ENCODE measurements at regions of chr6 and their contacts with region 1.

Region 1: DNA sequence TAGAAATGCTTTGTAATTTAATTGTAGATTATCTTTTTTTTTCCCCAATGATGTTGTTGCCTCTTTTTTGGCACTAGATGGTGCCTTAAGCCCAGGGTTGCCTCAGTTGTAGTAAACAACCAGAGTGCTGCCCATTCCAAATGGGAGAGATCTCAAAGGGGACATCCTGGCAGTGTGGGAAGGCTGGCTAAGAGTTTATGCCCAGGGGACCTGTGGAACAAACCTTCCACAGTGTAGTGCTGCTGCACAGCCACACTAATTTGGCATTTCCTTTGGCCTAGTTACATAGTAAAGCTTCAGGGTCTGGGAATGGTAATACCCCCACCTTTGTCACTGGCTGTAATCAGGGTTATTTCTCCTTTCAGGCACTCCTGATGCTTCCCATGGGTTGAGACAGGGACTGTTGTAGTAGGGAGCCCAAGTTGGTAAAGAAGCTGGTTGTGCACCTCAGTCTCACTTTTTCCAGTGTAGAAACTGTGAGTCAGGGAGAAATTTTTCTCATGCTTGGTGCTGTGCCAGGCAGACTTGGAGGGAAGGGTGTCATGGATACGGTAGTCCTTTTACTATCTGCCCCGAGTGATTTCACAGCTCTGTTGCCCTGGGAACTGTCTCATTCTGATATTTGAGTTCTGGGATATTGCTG is 177.8 kb upstream of the ECI2 start:
- DNase-seq: peak in 1 of 2 donors; percentile 87
- H3K4me3 ChIP-seq: peak overlapping the region in 1 of 2 donors; percentile 12
- H3K27ac ChIP-seq: peak overlapping the region; percentile 46 to 64
- H3K4me1 ChIP-seq: peaks cover 0 to 11% of the 10 kb centered on the region in 2 donors
- H3K27me3 ChIP-seq: no peaks in the 10 kb centered on the region
- CTCF ChIP-seq: peak in 2 of 3 experiments; percentile 23 to 40

Region 2: DNA sequence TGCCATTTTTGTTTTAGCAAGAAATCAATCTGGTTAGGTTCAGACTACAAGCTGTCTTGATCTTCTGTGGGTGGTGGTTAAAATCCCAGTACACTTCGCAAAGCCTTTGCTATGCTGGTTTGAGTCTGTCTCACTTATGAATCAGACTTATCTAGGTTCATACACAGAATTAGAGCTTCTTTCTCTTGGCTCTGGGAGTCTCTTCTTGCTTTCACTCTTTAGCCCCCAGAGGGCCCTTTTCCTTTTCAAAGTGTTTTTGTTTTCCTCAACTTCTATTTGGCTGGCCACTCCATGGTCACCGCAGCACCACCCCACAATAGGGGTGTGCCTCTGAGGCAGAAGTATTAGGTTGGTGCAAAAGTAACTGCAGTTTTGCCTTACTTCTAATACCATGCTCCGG is 199.0 kb before region 1 on chr6:
- intact Hi-C with region 1: no loop called
- DNase-seq: no peak
- H3K4me3 ChIP-seq: no peak overlapping the region
- H3K27ac ChIP-seq: no peak overlapping the region
- H3K4me1 ChIP-seq: peaks cover 0 to 3% of the 10 kb centered on the region in 2 donors
- H3K27me3 ChIP-seq: no peaks in the 10 kb centered on the region
- CTCF ChIP-seq: no peak

Region 3: GRCh38 chr6:4358414-4359114 is 45.4 kb after region 1 on chr6:
- intact Hi-C with region 1: loop called (anchors 2 kb)
- DNase-seq: peak; percentile 94 to 99
- H3K4me3 ChIP-seq: peak overlapping the region; percentile 35 to 39
- H3K27ac ChIP-seq: peak overlapping the region; percentile 96 to 98
- H3K4me1 ChIP-seq: peaks cover 5 to 10% of the 10 kb centered on the region in 2 donors
- H3K27me3 ChIP-seq: no peaks in the 10 kb centered on the region
- CTCF ChIP-seq: no peak

Region 4: GRCh38 chr6:4606821-4607704 is 293.9 kb after region 1 on chr6:
- intact Hi-C with region 1: loop called (anchors 10 kb)
- DNase-seq: peak in 1 of 2 donors; percentile 72
- H3K4me3 ChIP-seq: peak overlapping the region; percentile 29
- H3K27ac ChIP-seq: peak overlapping the region; percentile 55 to 61
- H3K4me1 ChIP-seq: peaks cover 0 to 17% of the 10 kb centered on the region in 2 donors
- H3K27me3 ChIP-seq: no peaks in the 10 kb centered on the region
- CTCF ChIP-seq: no peak

Region 5: DNA sequence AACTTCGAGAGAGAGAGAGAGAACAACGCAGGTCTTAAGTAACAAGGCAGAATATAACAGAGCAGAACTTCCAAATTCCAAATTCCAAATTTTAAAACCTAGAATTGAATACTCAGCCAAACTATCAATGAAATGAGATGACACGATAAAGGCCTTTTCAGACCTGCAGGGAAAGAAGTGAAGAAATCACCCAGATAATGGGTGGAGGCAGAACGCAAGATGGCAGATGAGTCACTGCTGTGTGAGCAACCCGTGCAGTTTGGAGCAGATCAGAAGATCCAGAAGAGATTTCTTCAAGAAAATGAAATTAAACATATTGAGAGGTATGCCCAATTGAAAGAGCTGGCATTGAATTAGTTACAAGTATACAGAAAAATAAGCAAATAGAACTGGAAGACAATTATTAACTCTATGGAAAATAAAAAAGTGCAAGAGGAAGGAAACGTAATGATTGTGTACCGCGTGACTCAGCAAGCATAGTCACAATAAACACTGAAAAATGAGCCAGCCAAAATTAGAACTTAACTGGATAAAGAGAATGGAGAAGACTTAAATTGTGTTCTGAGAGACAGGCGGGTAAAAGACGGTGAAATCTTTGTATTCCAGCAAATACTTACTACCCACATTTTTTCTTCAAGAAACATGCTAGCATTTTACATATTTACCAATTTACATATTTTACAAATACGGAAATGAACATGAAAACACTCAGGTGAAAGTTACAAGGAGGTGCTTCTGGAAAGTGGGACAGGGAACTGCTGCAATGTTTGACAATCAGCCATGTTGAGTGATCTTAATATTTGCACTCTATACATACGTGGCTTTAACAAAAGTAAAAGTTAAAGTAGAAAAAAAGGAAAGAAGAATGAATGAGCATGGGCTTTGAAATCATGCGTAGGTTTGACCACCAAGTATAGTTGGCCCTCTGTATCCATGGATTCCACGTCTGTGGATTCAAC is 375.1 kb after region 1 on chr6:
- intact Hi-C with region 1: no loop called
- DNase-seq: no peak
- H3K4me3 ChIP-seq: no peak overlapping the region
- H3K27ac ChIP-seq: no peak overlapping the region
- H3K4me1 ChIP-seq: no peaks in the 10 kb centered on the region
- H3K27me3 ChIP-seq: no peaks in the 10 kb centered on the region
- CTCF ChIP-seq: no peak

Region 6: GRCh38 chr6:5003604-5004372 is 690.6 kb after region 1 on chr6 and contains the start of gene RPP40:
- intact Hi-C with region 1: loop called (anchors 10 kb)
- DNase-seq: peak; percentile 93 to 99
- H3K4me3 ChIP-seq: peak within 1 kb of the TSS; percentile 56 to 71
- H3K27ac ChIP-seq: peak within 1 kb of the TSS; percentile 92 to 95
- H3K4me1 ChIP-seq: no peaks in the 10 kb centered on the region
- H3K27me3 ChIP-seq: no peaks in the 10 kb centered on the region
- CTCF ChIP-seq: peak; percentile 72 to 93 (median 93)
- total RNA-seq, gene RPP40: not detected